Keratinocyte (primary cell): ENCODE measurements at regions of chr17 and their contacts with region 1.

Region 1: GRCh38 chr17:67549820-67550219 is 167.9 kb upstream of the NOL11 start:
- DNase-seq: no peak
- H3K4me3 ChIP-seq: no peak overlapping the region
- H3K27ac ChIP-seq: no peak overlapping the region
- H3K4me1 ChIP-seq: no peaks in the 10 kb centered on the region
- H3K27me3 ChIP-seq: no peaks in the 10 kb centered on the region
- CTCF ChIP-seq: no peak

Region 2: DNA sequence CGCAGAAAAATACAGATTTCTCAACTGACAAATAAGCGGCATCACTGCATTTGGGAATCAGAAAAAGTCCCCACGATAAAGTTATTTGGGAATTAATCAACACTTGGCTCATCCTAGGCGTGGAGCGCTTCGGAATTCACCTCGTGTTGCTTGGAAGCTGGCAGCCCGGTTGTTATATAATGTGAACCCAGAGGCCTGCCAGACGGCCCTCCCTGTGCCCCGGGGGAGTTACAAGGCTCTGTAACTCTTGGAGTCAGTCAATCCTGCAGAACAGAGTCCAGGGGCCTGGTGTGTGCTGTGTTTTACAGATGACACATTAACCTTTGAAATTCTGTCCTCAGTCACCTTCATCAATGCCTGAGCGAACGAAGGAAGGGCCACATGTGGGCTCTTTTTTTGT is 61.7 kb before region 1 on chr17:
- dilution Hi-C with region 1: loop called (anchors 5 kb)
- DNase-seq: no peak
- H3K4me3 ChIP-seq: no peak overlapping the region
- H3K27ac ChIP-seq: peak overlapping the region; percentile 25
- H3K4me1 ChIP-seq: peaks cover 20% of the 10 kb centered on the region
- H3K27me3 ChIP-seq: no peaks in the 10 kb centered on the region
- CTCF ChIP-seq: no peak